ENCODE measurements at regions of chr15 and their contacts with region 1.

Region 1: DNA sequence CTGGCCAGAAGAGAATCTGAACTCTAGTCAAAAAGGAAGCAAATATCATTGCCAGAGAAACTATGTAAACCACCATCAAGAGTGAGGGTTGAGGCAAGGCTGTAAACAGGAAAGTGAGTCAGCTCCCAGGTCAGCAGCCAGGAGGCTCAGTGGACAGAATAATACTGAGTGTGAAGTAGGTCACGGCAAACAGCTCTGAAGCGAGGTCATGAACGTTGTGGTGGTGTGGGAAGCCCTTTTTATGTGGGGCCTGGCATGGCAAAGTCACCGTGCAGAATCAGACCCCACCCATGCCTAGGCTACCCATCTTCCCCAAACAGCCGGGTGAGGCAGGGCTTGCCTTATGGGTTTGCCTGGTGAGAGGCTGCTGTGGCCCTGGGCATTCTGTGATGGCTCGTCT is 43.9 kb downstream of the THBS1 start:
- DNase-seq: peak; percentile 68
- H3K4me3 Mint-ChIP-seq: peak overlapping the region; percentile 67
- H3K27ac Mint-ChIP-seq: peak overlapping the region; percentile 99
- H3K4me1 Mint-ChIP-seq: peaks cover 75% of the 10 kb centered on the region
- H3K27me3 Mint-ChIP-seq: no peaks in the 10 kb centered on the region

Region 2: DNA sequence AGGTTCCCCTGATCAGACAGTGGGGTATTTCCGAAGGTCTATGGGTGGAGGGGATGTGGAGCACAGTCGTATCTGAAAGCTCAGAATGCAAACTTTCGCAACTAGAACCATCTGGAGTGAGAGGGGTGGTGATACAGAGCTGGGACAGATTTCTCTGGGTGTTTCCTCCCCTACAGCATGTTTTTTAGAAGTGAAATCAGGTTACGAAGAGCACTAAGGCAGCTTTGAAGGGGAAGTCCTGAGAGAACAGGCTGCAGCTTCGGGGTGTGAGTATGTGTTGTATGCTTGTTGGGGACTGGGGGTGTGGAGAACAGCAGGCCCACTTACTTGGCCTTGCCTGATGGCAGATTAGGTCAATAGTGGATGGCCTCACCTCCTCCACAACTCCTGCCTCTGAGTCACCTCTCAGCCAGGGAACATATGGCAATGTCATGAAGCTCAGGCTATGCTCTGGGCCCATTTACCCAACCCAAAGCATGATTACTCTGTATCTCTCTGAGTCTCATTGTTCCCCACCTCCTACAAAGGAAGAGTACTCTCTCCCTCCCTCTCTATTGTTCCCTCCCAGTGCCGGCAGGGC is 953.0 kb before region 1 on chr15:
- intact Hi-C with region 1: loop called (anchors 5 kb)
- DNase-seq: peak; percentile 41
- H3K4me3 Mint-ChIP-seq: peak overlapping the region; percentile 68
- H3K27ac Mint-ChIP-seq: peak overlapping the region; percentile 98
- H3K4me1 Mint-ChIP-seq: peaks cover 66% of the 10 kb centered on the region
- H3K27me3 Mint-ChIP-seq: no peaks in the 10 kb centered on the region

Region 3: GRCh38 chr15:39140060-39140604 is 484.7 kb before region 1 on chr15:
- intact Hi-C with region 1: loop called (anchors 5 kb)
- DNase-seq: peak; percentile 11
- H3K4me3 Mint-ChIP-seq: no peak overlapping the region
- H3K27ac Mint-ChIP-seq: no peak overlapping the region
- H3K4me1 Mint-ChIP-seq: peaks cover 34% of the 10 kb centered on the region
- H3K27me3 Mint-ChIP-seq: peaks cover 4% of the 10 kb centered on the region

Region 4: DNA sequence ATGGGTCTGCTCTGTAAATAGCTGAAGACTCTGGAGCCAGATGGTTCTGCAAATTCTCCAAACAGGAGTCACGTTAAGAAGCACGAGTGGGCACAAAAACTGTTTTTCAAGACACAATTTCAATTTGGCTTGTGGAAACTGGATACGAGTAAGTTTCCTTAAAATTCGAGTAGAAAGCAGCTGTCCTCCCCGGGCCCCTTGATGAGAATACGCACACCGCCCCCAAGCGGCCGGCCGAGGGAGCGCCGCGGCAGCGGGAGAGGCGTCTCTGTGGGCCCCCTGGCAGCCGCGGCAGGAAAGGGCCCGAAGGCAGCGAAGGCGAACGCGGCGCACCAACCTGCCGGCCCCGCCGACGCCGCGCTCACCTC is 44.7 kb before region 1 on chr15:
- intact Hi-C with region 1: loop called (anchors 2 kb)
- DNase-seq: peak; percentile 81
- H3K4me3 Mint-ChIP-seq: peak overlapping the region; percentile 41
- H3K27ac Mint-ChIP-seq: no peak overlapping the region
- H3K4me1 Mint-ChIP-seq: peaks cover 16% of the 10 kb centered on the region
- H3K27me3 Mint-ChIP-seq: peaks cover 53% of the 10 kb centered on the region

Region 5: GRCh38 chr15:39782441-39783138 is 157.8 kb after region 1 on chr15 and contains the start of gene FSIP1:
- intact Hi-C with region 1: loop called (anchors 5 kb)
- DNase-seq: peak; percentile 95
- H3K4me3 Mint-ChIP-seq: peak within 1 kb of the TSS; percentile 81
- H3K27ac Mint-ChIP-seq: peak within 1 kb of the TSS; percentile 67
- H3K4me1 Mint-ChIP-seq: peaks cover 34% of the 10 kb centered on the region
- H3K27me3 Mint-ChIP-seq: peaks cover 6% of the 10 kb centered on the region
- total RNA-seq, gene FSIP1: 0.14 and 0.16 TPM in 2 replicates

Region 6: GRCh38 chr15:39887832-39888231 is 263.0 kb after region 1 on chr15:
- intact Hi-C with region 1: no loop called
- DNase-seq: no peak
- H3K4me3 Mint-ChIP-seq: no peak overlapping the region
- H3K27ac Mint-ChIP-seq: no peak overlapping the region
- H3K4me1 Mint-ChIP-seq: no peaks in the 10 kb centered on the region
- H3K27me3 Mint-ChIP-seq: peaks cover 15% of the 10 kb centered on the region

Region 7: GRCh38 chr15:40307421-40308211 is 682.8 kb after region 1 on chr15 and contains the start of gene PLCB2:
- intact Hi-C with region 1: loop called (anchors 10 kb)
- DNase-seq: peak; percentile 68
- H3K4me3 Mint-ChIP-seq: peak within 1 kb of the TSS; percentile 90
- H3K27ac Mint-ChIP-seq: peak within 1 kb of the TSS; percentile 97
- H3K4me1 Mint-ChIP-seq: peaks cover 28% of the 10 kb centered on the region
- H3K27me3 Mint-ChIP-seq: peaks cover 10% of the 10 kb centered on the region
- total RNA-seq, gene PLCB2: 96.3 and 98.9 TPM in 2 replicates